GM10248 (cell line): ENCODE measurements at regions of chr17 and their contacts with region 1.

Region 1: DNA sequence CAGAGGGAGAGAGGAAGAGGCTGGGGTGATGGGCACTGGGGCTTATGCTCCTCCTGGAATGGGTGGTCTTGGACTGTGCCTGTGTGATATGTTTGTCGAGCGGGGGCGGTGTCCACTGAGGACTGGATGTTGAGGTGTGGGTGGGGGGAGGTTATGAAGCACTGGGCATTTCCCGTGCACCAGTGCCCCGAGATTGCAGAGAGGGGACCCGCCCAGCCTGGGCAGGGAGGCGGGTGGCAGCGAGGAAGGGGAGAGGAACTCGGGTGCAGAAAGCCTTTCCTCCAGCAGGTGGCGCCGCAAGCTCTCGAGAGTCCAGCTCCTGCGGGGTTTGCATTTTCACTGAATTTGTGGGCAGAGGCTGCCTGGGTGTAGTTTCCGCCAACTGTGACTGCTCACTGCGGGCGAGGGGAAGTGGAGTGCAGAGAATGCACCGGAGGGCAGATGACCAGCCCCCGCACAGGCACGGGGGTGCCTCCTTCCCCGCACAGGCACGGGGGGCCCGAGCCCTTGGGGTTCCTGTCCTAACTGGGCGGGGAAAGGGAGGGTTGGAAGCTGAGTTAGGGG is 190.6 kb downstream of the SEC14L1 start:
- DNase-seq: peak; percentile 92
- CTCF ChIP-seq: peak; percentile 86

Region 2: DNA sequence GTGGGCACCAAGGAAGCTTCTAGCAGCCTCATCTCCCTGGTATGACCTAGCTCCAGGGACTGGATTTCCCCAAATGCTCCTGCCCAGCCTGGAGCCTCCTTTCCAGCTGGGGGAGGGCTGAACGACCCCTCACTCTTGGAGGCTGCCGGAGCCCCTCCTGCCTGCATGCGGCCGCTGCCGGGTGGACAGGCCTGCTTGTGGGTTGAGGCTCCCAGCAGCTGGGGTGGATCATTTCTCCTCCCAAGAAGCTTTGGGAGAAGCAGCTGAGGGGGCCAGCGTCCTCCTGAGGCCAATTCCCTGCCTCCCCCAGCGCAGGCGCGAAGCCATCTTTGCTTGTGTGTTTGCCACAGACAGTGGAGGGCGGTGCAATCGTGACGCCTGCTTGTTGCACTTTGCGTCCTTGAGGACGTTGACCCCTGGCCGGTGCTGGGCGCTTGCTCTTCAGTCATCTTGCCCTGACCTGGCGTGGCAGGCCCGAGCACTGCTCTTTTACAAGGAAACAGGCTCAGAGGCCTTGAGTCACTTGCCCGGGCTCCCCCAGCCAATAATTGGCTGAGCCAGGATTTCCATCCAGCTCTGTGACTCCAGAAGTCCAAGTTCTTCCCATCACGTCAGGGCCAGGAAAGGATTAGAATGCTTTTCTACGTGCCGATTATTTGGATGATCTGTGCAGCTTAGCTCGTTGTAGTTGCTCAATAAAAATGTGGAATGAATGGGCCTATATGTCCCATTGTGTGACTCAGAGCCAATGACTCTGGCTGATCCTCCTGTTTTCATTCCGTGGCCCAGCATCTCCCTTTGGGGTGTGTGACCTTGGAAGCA is 23.2 kb after region 1 on chr17:
- CTCF ChIA-PET with region 1: interaction called, 14 read pairs
- POLR2A ChIA-PET with region 1: no interaction called
- DNase-seq: peak; percentile 8
- CTCF ChIP-seq: no peak

Region 3: GRCh38 chr17:77404812-77405581 is 73.6 kb after region 1 on chr17:
- CTCF ChIA-PET with region 1: interaction called, 17 read pairs
- POLR2A ChIA-PET with region 1: no interaction called
- DNase-seq: peak; percentile 92
- CTCF ChIP-seq: no peak

Region 4: DNA sequence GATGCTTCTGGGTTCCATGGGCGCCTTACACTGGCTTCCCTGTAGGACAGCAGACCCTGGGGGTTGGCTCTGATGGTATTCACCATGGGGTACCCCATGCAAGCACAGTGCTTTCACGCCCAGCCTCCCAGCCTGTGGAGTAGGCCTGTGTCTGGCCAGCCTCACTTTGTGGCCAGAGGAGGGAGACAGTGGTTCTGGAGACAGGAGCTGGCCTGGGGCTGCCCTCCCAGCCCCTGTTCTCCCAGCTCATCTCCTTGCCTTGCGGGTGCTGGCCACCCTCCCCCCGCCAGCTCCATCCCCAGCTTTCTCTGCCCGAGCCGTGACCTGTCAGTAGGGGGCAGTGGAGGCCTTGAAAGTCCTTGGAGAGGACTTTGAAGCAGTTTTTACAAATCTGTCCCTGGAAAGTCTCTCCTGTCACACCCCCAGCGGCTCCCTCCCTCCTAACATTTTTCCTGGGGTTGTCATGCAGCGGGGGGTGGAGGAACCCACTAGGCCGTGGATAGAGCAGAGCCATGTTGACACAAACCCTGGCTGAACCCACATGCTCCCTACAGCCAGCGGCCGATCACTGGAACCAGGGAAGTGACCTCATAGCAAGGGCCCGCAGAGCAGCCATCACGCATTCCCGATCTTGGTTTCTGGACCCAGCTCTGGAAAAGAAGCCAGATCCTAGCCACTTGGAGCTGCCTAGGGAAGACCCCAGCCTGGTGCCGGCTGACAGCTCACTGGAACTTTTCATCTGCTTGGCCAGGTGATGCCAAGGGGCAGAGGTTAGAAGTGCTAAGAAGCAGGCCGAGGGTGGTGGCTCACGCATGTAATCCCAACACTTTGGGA is 98.8 kb after region 1 on chr17:
- CTCF ChIA-PET with region 1: interaction called, 61 read pairs
- POLR2A ChIA-PET with region 1: no interaction called
- DNase-seq: peak; percentile 80
- CTCF ChIP-seq: peak; percentile 91

Region 5: DNA sequence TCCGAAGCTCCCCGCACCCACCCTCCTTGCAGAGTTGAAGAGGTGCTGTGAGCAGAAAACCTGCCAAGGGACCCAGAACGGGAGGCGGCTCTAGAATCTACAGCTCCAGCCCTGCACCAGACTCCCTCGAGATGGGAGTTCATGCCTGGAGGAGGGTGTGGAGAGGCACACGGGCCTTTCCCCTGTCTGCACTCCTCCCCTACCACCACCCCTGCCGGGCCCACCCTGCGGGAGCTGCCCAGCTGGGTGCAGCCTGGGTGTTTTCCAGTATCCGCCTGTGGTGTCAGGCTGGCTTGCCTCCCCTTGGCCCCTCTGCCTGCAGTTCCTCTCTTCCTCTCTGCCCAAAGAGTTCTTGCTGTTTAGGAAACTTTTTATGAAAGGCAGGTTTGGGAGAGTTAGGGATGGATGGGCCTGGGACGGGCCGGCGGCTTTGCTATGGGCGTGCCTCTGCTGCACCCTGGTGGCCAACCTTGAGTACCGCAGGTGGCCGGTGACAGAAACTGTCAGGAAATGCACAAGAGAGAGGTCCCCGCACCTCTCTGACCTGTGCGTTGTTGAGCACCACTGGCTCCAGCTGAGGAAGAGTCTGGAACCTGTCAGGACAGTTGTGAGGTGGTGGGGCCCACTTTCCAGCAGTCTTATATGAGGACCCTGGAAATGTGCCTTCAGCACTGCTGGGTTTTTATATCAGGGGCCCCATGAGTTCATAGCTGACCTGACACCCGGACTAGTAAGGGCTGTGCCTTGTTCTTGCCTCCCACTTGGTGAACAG is 163.5 kb after region 1 on chr17:
- CTCF ChIA-PET with region 1: interaction called, 50 read pairs
- POLR2A ChIA-PET with region 1: no interaction called
- DNase-seq: peak; percentile 84
- CTCF ChIP-seq: peak; percentile 94